Naive thymus-derived CD4-positive, alpha-beta T cell (primary cell): ENCODE measurements at regions of chr12 and their contacts with region 1.

Region 1: DNA sequence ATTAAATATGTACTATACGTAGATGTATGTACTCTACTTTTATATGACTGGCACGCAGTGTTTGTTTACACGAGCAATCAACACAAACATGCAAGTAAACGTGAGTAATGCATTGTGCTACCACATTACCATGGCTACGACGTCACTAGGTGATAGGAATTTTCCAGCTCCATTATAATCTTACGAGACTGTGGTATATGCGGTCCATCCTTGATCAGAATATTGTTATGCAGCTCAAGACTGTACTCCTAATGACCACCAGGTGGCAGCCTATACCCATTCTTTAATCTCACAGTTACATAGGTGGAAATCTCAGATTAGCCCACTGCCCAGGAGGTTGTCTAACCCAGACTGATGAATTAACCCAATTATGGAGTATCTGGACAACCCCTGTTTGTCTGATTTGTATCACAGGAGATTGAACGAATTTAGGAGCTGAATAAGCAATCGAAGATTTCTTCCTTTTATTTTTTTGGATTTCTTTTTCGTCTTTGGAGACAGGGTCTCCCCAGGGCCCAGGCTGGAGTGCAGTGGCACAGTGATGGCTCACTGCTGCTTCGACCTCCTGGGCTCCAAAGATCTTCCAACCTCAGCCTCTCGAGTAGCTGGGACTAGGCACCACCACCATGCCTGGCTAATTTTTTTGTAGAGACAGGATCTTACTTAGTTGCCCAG is 8.7 kb upstream of the TESPA1 start:
- DNase-seq: peak in 8 of 9 donors; percentile 42 to 83 (median 70)
- ATAC-seq: peak; percentile 91
- H3K4me3 ChIP-seq: no peak overlapping the region
- H3K4me3 Mint-ChIP-seq: peak overlapping the region in 4 of 10 donors; percentile 13 to 43 (median 29)
- H3K27ac ChIP-seq: peak overlapping the region; percentile 66
- H3K27ac Mint-ChIP-seq: peak overlapping the region in 8 of 9 donors; percentile 15 to 98 (median 71)
- H3K4me1 ChIP-seq: peaks cover 23 to 37% of the 10 kb centered on the region in 2 donors
- H3K4me1 Mint-ChIP-seq: peaks cover 34 to 59% (median 47%) of the 10 kb centered on the region in 7 donors
- H3K27me3 ChIP-seq: no peaks in the 10 kb centered on the region
- H3K27me3 Mint-ChIP-seq: peaks cover 0 to 4% (median 0%) of the 10 kb centered on the region in 5 donors

Region 2: GRCh38 chr12:54701940-54702592 is 291.2 kb before region 1 on chr12:
- CTCF ChIA-PET with region 1: interaction called, 33 read pairs
- POLR2A ChIA-PET with region 1: no interaction called
- intact Hi-C with region 1: loop called in 1 of 2 experiments (anchors 1 kb)
- DNase-seq: peak in 7 of 9 donors; percentile 16 to 67 (median 56)
- ATAC-seq: peak; percentile 81
- H3K4me3 ChIP-seq: no peak overlapping the region
- H3K4me3 Mint-ChIP-seq: no peak overlapping the region
- H3K27ac ChIP-seq: no peak overlapping the region
- H3K27ac Mint-ChIP-seq: no peak overlapping the region
- H3K4me1 ChIP-seq: no peaks in the 10 kb centered on the region
- H3K4me1 Mint-ChIP-seq: no peaks in the 10 kb centered on the region
- H3K27me3 ChIP-seq: no peaks in the 10 kb centered on the region
- H3K27me3 Mint-ChIP-seq: peaks cover 0 to 27% (median 6%) of the 10 kb centered on the region in 5 donors

Region 3: DNA sequence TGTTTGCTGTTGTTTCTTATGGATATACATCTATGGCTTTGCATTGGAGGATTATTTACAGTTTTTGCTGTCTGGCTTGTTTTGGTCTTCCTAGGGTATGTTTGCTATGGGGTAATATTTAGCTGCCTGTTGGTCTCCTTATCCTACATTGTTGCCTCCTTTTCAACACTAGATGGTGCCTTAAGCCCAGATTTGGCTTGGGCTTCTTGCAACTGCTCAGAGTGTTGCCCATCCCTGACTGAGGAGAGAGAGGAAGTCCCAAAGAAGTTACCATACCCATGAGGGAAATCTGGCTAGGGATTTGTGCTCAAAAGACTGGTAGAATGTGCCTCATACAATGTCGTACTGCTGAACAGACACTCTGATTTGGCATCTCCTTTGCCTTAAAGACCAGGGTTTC is 233.5 kb before region 1 on chr12:
- CTCF ChIA-PET with region 1: interaction called, 17 read pairs
- POLR2A ChIA-PET with region 1: no interaction called
- intact Hi-C with region 1: no loop called
- DNase-seq: peak in 3 of 9 donors; percentile 14 to 45 (median 26)
- ATAC-seq: no peak
- H3K4me3 ChIP-seq: no peak overlapping the region
- H3K4me3 Mint-ChIP-seq: no peak overlapping the region
- H3K27ac ChIP-seq: no peak overlapping the region
- H3K27ac Mint-ChIP-seq: no peak overlapping the region
- H3K4me1 ChIP-seq: no peaks in the 10 kb centered on the region
- H3K4me1 Mint-ChIP-seq: peaks cover 0 to 20% (median 4%) of the 10 kb centered on the region in 7 donors
- H3K27me3 ChIP-seq: no peaks in the 10 kb centered on the region
- H3K27me3 Mint-ChIP-seq: peaks cover 0 to 24% (median 0%) of the 10 kb centered on the region in 5 donors

Region 4: GRCh38 chr12:54935235-54935951 is 57.9 kb before region 1 on chr12:
- CTCF ChIA-PET with region 1: interaction called, 8 read pairs
- POLR2A ChIA-PET with region 1: interaction called, 3 read pairs
- intact Hi-C with region 1: loop called in 1 of 2 experiments (anchors 1 kb)
- DNase-seq: peak in 8 of 9 donors; percentile 40 to 67 (median 51)
- ATAC-seq: peak; percentile 88
- H3K4me3 ChIP-seq: no peak overlapping the region
- H3K4me3 Mint-ChIP-seq: peak overlapping the region; percentile 0 to 74 (median 62)
- H3K27ac ChIP-seq: peak overlapping the region; percentile 29
- H3K27ac Mint-ChIP-seq: peak overlapping the region; percentile 60 to 98 (median 88)
- H3K4me1 ChIP-seq: peaks cover 36 to 39% of the 10 kb centered on the region in 2 donors
- H3K4me1 Mint-ChIP-seq: peaks cover 28 to 56% (median 53%) of the 10 kb centered on the region in 7 donors
- H3K27me3 ChIP-seq: no peaks in the 10 kb centered on the region
- H3K27me3 Mint-ChIP-seq: no peaks in the 10 kb centered on the region

Region 5: DNA sequence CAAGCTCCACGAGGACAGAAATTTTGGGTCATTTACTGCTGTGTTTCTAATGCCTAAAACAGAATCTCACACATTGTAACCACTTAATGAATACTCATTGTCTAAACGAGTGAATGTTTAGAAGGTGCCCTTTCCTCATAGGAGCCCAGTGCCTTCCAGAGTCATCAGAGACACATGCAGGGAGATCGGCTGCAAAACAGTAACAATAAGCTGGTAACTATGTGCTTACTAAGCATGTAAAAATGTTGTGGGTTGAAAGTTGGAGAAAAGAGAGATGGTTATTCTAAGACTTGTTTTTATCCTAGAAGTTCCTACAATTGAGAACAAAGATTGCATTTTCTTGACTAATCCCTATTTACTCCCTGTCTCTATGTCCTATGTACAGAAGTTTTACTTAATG is 16.1 kb before region 1 on chr12:
- CTCF ChIA-PET with region 1: interaction called, 30 read pairs
- POLR2A ChIA-PET with region 1: interaction called, 309 read pairs
- intact Hi-C with region 1: no loop called
- DNase-seq: no peak
- ATAC-seq: no peak
- H3K4me3 ChIP-seq: peak overlapping the region; percentile 2
- H3K4me3 Mint-ChIP-seq: peak overlapping the region; percentile 79 to 98 (median 93)
- H3K27ac ChIP-seq: peak overlapping the region; percentile 94
- H3K27ac Mint-ChIP-seq: peak overlapping the region; percentile 57 to 98 (median 95)
- H3K4me1 ChIP-seq: peaks cover 60 to 79% of the 10 kb centered on the region in 2 donors
- H3K4me1 Mint-ChIP-seq: peaks cover 82 to 100% (median 96%) of the 10 kb centered on the region in 7 donors
- H3K27me3 ChIP-seq: no peaks in the 10 kb centered on the region
- H3K27me3 Mint-ChIP-seq: no peaks in the 10 kb centered on the region

Region 6: DNA sequence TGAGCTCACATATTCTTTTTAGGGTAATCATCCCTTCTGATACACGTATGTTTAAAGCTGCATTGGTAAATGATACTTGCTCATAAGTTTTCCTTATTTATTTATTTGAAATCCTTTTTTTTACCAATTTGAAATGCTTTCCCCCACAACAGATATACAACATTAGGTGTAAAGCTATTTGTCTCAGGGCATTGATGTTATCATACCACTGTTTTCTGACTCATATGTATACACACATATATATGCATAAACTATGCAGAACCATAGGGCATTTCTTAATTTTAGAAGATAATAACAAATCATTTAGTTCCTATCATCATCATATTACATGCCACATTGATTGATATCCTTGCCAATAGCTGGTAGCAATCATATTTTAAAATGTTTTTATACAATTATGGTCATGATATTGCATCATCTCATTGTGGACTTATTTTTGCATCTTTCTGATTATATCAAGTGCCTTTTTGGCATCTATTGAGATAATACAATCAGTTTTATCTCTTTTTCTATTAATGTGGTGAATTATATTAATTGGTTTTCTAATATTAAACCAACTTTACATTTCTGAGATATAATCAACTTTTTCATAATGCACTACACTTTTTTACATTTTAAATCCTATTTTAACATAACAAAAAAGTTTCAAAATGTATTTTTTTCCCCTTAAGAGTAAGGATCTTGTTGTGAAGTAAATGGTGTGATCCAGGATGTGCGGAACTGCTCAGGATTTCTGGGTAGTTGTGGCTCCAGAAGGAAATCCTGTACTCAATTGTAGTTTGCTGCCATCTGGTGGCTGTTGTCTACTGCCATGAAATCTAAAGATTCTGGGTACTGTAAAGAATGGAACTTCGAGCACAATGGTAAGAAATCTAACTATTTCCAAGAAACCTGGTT is 149.6 kb after region 1 on chr12:
- CTCF ChIA-PET with region 1: no interaction called
- POLR2A ChIA-PET with region 1: no interaction called
- intact Hi-C with region 1: loop called in 1 of 2 experiments (anchors 1 kb)
- DNase-seq: peak in 6 of 9 donors; percentile 10 to 41 (median 20)
- ATAC-seq: peak; percentile 29
- H3K4me3 ChIP-seq: no peak overlapping the region
- H3K4me3 Mint-ChIP-seq: no peak overlapping the region
- H3K27ac ChIP-seq: no peak overlapping the region
- H3K27ac Mint-ChIP-seq: no peak overlapping the region
- H3K4me1 ChIP-seq: no peaks in the 10 kb centered on the region
- H3K4me1 Mint-ChIP-seq: peaks cover 0 to 6% (median 0%) of the 10 kb centered on the region in 7 donors
- H3K27me3 ChIP-seq: no peaks in the 10 kb centered on the region
- H3K27me3 Mint-ChIP-seq: peaks cover 0 to 35% (median 0%) of the 10 kb centered on the region in 5 donors